H1 (cell line): ENCODE measurements at regions of chr2 and their contacts with region 1.

Region 1: DNA sequence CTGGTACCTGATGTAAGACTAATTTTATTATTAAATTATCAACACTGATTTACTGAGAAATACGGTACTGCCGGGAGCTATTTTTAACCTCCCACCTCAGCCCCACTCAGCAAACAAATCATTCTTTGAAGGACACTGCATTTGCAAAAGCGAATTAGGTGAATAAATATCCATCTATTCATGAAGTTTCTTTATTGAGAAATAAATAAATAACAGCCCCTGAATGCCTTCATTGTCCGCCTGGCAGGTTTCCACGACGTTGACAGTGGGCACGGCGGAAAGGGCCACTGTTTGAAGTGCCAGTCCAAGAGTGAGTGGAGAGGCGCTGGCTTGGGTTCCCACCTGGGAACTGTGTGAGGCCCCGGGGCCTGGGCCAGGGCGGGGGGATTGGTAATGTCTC is 15.7 kb downstream of the C1QL2 start:
- DNase-seq: no peak
- H3K4me3 ChIP-seq: no peak overlapping the region
- H3K27ac ChIP-seq: no peak overlapping the region
- H3K4me1 ChIP-seq: peaks cover 0 to 5% (median 2%) of the 10 kb centered on the region in 4 experiments; a peak in 3 of 7 replicates
- H3K27me3 ChIP-seq: no peaks in the 10 kb centered on the region
- CTCF ChIP-seq: no peak
- EP300 ChIP-seq: no peak
- POLR2A ChIP-seq: no peak
- RAD21 ChIP-seq: no peak

Region 2: DNA sequence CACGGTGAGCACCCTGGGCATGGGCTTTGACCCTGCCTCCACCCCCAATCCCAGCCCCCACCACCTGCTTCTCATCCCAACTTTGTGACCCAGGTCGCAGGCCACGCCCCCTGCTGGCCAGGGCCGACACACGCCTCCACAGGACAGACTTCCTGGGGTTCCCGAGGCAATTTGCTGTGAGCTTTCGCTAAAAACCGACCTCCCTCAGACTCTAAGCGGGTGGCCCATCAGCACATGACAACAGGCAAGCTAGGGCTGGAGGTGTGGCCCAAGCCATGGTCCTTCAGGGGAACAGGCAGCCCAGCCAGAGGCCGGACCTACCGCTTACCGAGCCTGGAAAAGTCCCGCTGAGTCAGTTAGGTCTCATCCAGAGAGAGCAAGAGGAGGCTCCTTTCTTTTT is 16.2 kb before region 1 on chr2:
- CTCF ChIA-PET with region 1: interaction called, 198 read pairs
- POLR2A ChIA-PET with region 1: interaction called, 3 read pairs
- DNase-seq: peak; percentile 84 to 90
- H3K4me3 ChIP-seq: peak overlapping the region in 1 of 4 experiments; percentile 16; a peak in 1 of 8 replicates
- H3K27ac ChIP-seq: no peak overlapping the region
- H3K4me1 ChIP-seq: peaks cover 0 to 16% (median 8%) of the 10 kb centered on the region in 4 experiments; a peak in 4 of 7 replicates
- H3K27me3 ChIP-seq: peaks cover 0 to 9% (median 0%) of the 10 kb centered on the region in 4 experiments; a peak in 2 of 7 replicates
- CTCF ChIP-seq: peak; percentile 69 to 83 (median 77)
- EP300 ChIP-seq: no peak
- POLR2A ChIP-seq: no peak
- RAD21 ChIP-seq: peak; percentile 49 to 66

Region 3: DNA sequence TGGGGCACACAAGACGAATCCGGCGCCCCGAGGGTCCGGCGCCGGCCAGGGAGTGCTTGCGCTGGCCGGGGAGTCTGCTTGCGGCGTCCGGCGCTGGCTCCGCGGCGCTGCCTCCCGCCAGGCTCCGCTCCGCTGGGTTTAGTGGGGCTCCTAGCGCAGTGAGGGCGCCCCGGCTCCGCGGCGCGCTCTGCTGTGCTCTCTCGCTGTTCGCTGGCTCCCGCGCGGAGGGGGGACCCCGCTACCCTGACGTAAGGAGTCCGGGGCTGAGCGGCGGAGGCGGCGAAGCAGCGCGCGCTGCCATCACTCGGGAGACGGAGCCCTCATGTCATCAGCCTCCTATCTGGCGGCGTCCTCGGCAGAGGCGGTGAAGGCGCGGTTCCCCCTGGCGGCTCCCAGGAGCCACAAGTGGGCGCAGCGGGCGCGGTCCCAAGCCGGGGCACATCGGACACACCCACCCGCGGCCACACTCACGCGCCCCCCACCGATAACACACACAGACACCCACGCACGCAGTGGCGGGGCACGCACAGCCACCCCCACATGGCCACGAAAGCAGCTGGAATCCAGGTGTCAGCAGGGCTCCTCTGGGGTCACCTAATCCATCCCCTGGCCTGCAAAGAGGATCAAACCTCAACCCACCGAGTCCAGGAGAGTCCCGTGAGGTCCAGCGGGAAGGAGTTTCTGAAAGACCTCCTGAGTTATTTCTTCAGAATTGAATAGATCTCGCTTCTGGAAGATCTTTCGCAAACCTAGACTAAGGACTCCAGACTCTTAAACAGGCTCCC is 15.9 kb after region 1 on chr2 and contains the start of gene C1QL2:
- CTCF ChIA-PET with region 1: interaction called, 16 read pairs
- POLR2A ChIA-PET with region 1: interaction called, 5 read pairs
- DNase-seq: peak in 1 of 2 experiments; percentile 74
- H3K4me3 ChIP-seq: peak within 1 kb of the TSS; percentile 61 to 73 (median 68)
- H3K27ac ChIP-seq: no peak within 1 kb of the TSS
- H3K4me1 ChIP-seq: peaks cover 4 to 25% (median 18%) of the 10 kb centered on the region in 4 experiments
- H3K27me3 ChIP-seq: peaks cover 29 to 41% (median 38%) of the 10 kb centered on the region in 4 experiments
- CTCF ChIP-seq: peak; percentile 46 to 56 (median 48)
- EP300 ChIP-seq: no peak
- POLR2A ChIP-seq: no peak
- RAD21 ChIP-seq: peak; percentile 28 to 53; a peak in 3 of 4 replicates
- total RNA-seq, gene C1QL2: 0.88 and 1.1 TPM in 2 replicates

Region 4: DNA sequence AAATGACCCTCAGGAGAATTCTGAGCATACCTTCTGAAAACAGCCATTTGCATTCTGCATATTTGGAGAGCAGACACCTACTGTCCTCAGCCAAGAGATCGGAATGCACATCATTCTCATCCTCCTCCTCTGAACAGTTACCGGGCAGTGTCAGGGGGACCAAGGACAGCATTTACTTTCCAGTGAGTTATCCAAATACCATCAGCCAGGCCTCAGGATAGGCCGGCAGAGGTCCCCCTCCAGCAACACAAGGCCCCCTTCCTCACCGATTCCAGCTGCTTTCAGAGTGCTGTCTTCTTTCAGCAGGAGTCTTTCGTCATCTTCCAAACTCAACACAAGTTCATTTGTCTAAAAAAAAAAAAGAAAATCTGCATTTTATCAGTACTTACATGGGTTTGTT is 168.5 kb after region 1 on chr2:
- CTCF ChIA-PET with region 1: no interaction called
- POLR2A ChIA-PET with region 1: no interaction called
- DNase-seq: no peak
- H3K4me3 ChIP-seq: no peak overlapping the region
- H3K27ac ChIP-seq: no peak overlapping the region
- H3K4me1 ChIP-seq: peaks cover 0 to 5% (median 1%) of the 10 kb centered on the region in 4 experiments; a peak in 2 of 7 replicates
- H3K27me3 ChIP-seq: no peaks in the 10 kb centered on the region
- CTCF ChIP-seq: peak; percentile 27 to 53 (median 51)
- EP300 ChIP-seq: no peak
- POLR2A ChIP-seq: no peak
- RAD21 ChIP-seq: peak; percentile 61 to 73